ENCODE measurements at regions of chr11 and their contacts with region 1.

Region 1: GRCh38 chr11:13462901-13463778 is at the start of gene BTBD10:
- DNase-seq: peak; percentile 95
- H3K4me3 Mint-ChIP-seq: peak within 1 kb of the TSS; percentile 99
- H3K27ac Mint-ChIP-seq: peak within 1 kb of the TSS; percentile 96
- H3K4me1 Mint-ChIP-seq: peaks cover 25% of the 10 kb centered on the region
- H3K27me3 Mint-ChIP-seq: no peaks in the 10 kb centered on the region
- CTCF ChIP-seq: no peak
- total RNA-seq, gene BTBD10: 38.3 and 42.2 TPM in 2 replicates

Region 2: GRCh38 chr11:13216019-13216710 is 247.0 kb before region 1 on chr11:
- CTCF ChIA-PET with region 1: interaction called, 3 read pairs
- POLR2A ChIA-PET with region 1: no interaction called
- intact Hi-C with region 1: loop called (anchors 1 kb)
- DNase-seq: peak; percentile 92
- H3K4me3 Mint-ChIP-seq: peak overlapping the region; percentile 32
- H3K27ac Mint-ChIP-seq: peak overlapping the region; percentile 85
- H3K4me1 Mint-ChIP-seq: peaks cover 26% of the 10 kb centered on the region
- H3K27me3 Mint-ChIP-seq: no peaks in the 10 kb centered on the region
- CTCF ChIP-seq: no peak

Region 3: GRCh38 chr11:13297917-13298356 is 165.2 kb before region 1 on chr11:
- CTCF ChIA-PET with region 1: no interaction called
- POLR2A ChIA-PET with region 1: no interaction called
- intact Hi-C with region 1: no loop called
- DNase-seq: peak; percentile 52
- H3K4me3 Mint-ChIP-seq: no peak overlapping the region
- H3K27ac Mint-ChIP-seq: no peak overlapping the region
- H3K4me1 Mint-ChIP-seq: peaks cover 31% of the 10 kb centered on the region
- H3K27me3 Mint-ChIP-seq: no peaks in the 10 kb centered on the region
- CTCF ChIP-seq: no peak

Region 4: DNA sequence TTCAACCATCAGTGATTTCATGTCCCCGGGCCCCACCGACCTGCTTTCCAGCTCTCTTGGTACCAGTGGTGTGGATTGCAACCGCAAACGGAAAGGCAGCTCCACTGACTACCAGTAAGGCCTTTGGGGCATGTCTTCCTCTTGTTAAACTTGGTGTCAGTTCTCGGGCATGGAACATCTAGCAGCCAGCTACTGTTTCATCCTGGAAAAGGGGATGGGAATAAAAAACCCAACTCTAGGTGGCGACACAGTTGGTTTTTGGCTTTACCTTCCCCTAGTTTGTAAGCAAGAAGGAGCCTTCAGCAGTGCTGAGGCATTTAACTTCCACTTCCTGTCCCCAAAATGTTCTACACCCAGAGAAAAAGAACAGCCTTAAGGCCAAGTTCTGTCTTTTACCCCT is 108.8 kb before region 1 on chr11:
- CTCF ChIA-PET with region 1: interaction called, 9 read pairs
- POLR2A ChIA-PET with region 1: interaction called, 5 read pairs
- intact Hi-C with region 1: loop called (anchors 10 kb)
- DNase-seq: peak; percentile 43
- H3K4me3 Mint-ChIP-seq: no peak overlapping the region
- H3K27ac Mint-ChIP-seq: peak overlapping the region; percentile 46
- H3K4me1 Mint-ChIP-seq: no peaks in the 10 kb centered on the region
- H3K27me3 Mint-ChIP-seq: no peaks in the 10 kb centered on the region
- CTCF ChIP-seq: no peak

Region 5: DNA sequence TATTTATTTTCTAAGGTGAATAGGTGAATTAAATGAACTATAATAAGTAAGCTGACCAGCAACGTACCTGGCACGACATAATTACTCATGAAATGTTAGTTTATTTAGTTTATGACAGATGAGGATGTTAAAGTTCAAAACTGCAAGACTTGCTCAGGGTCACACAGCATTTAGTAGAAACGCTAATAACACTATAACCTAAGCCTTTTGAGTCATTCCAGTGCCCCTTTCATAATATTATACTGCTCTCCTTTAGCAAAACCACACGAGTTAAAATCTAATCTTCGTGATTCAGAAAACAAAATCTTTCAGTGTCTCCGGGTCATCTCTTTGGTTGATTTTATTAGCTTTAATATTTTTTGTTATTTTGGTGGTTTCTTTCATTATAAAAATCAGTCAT is 39.8 kb before region 1 on chr11:
- CTCF ChIA-PET with region 1: interaction called, 7 read pairs
- POLR2A ChIA-PET with region 1: interaction called, 51 read pairs
- intact Hi-C with region 1: no loop called
- DNase-seq: no peak
- H3K4me3 Mint-ChIP-seq: no peak overlapping the region
- H3K27ac Mint-ChIP-seq: no peak overlapping the region
- H3K4me1 Mint-ChIP-seq: peaks cover 23% of the 10 kb centered on the region
- H3K27me3 Mint-ChIP-seq: no peaks in the 10 kb centered on the region
- CTCF ChIP-seq: no peak

Region 6: GRCh38 chr11:13448876-13449275 is 14.3 kb before region 1 on chr11:
- CTCF ChIA-PET with region 1: interaction called, 7 read pairs
- POLR2A ChIA-PET with region 1: interaction called, 148 read pairs
- intact Hi-C with region 1: no loop called
- DNase-seq: peak; percentile 41
- H3K4me3 Mint-ChIP-seq: no peak overlapping the region
- H3K27ac Mint-ChIP-seq: peak overlapping the region; percentile 36
- H3K4me1 Mint-ChIP-seq: peaks cover 16% of the 10 kb centered on the region
- H3K27me3 Mint-ChIP-seq: no peaks in the 10 kb centered on the region
- CTCF ChIP-seq: no peak

Region 7: DNA sequence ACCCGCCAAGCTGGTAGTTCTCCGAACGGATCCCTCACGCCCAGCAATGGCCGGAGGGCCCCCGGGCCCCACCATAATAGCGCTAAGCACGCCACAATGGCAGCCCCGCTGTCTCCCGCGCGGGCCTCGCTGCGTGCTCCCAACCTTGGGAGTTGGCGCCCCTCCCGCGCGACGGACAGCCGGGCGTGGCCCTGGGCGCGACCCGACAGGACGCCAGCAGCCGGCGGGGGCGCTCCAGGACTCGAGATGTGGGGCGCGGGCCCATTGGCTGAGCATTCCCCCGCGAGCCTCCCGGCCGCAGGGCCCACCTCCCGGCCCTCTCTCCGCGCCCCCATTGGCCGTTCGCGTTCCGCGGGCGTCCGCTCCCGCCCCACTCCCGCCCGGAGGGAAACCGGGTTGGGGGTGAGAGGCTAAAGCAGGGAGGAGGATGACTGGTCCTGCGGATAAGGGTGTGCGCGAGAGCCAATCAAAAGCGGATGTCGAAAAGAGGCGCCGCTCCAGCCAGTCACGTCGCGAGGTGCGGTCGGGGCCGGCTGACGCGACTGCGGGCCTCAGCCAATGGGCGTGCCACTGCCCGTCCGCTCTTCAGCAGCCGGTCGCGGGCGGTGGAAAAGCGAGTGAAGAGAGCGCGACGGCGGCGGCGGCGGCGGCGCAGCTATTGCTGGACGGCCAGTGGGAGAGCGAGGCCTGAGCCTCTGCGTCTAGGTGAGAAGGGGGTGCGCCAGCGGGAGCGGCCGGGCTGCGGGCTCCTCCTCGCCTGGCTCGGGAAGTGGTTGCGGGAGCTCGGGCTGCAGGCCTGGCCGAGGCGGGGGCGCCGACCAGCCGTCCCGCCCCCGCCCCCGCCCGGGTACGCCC is 205.2 kb after region 1 on chr11 and contains the start of gene FAR1:
- CTCF ChIA-PET with region 1: interaction called, 3 read pairs
- POLR2A ChIA-PET with region 1: interaction called, 13 read pairs
- intact Hi-C with region 1: no loop called
- DNase-seq: peak; percentile 99
- H3K4me3 Mint-ChIP-seq: peak within 1 kb of the TSS; percentile 92
- H3K27ac Mint-ChIP-seq: peak within 1 kb of the TSS; percentile 91
- H3K4me1 Mint-ChIP-seq: peaks cover 45% of the 10 kb centered on the region
- H3K27me3 Mint-ChIP-seq: no peaks in the 10 kb centered on the region
- CTCF ChIP-seq: peak; percentile 36
- total RNA-seq, gene FAR1: 106 and 112 TPM in 2 replicates

Measured in MCF 10A (cell line).